B cell (primary cell): ENCODE measurements at regions of chr1 and their contacts with region 1.

Region 1: GRCh38 chr1:26431979-26432695 is at the start of gene DHDDS:
- DNase-seq: peak; percentile 99
- ATAC-seq: peak; percentile 97
- H3K4me3 ChIP-seq: peak within 1 kb of the TSS; percentile 62 to 97 (median 77)
- H3K4me3 Mint-ChIP-seq: peak within 1 kb of the TSS; percentile 95
- H3K27ac ChIP-seq: peak within 1 kb of the TSS; percentile 61 to 86
- H3K27ac Mint-ChIP-seq: peak within 1 kb of the TSS; percentile 93
- H3K4me1 ChIP-seq: peaks cover 15 to 21% of the 10 kb centered on the region in 2 donors
- H3K4me1 Mint-ChIP-seq: peaks cover 20% of the 10 kb centered on the region
- H3K27me3 ChIP-seq: no peaks in the 10 kb centered on the region
- H3K27me3 Mint-ChIP-seq: no peaks in the 10 kb centered on the region
- CTCF ChIP-seq: no peak
- total RNA-seq, gene DHDDS: 54.2 and 61.7 TPM in 2 replicates

Region 2: DNA sequence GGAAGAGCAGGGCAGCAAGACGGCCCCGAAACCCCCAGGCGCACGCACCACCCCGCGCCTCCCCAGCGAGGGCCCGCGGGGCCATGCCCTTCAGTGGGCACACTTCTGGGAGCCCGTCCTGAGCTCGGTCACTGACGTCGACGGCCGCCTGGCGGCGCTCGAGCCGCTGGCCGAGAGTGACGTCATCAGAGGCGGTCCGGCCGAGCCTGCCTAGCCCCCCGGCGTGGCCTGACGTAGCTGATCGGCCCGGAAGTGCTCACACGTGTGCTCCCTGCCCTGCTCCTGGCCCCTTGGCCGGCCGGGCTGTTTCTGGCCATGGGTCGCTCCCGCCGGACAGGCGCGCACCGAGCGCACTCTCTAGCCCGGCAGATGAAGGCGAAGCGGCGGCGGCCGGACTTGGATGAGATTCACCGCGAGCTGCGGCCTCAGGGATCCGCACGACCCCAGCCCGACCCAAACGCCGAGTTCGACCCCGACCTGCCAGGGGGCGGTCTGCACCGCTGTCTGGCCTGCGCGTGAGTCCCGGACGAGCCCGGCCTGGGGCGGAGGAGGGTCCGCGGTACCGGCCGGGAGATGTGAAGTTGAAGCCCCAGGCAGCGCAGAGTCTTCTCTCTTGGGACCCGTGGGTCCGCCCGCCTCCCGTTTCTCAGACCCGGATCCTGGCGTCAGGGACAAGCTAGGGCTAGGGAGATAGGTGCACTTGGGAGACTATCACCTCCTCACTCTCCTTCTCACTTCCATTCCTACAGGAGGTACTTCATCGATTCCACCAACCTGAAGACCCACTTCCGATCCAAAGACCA is 262.3 kb before region 1 on chr1 and contains the start of gene ZNF593:
- CTCF ChIA-PET with region 1: interaction called, 7 read pairs
- POLR2A ChIA-PET with region 1: no interaction called
- intact Hi-C with region 1: loop called (anchors 1 kb)
- DNase-seq: peak; percentile 92
- ATAC-seq: peak; percentile 97
- H3K4me3 ChIP-seq: peak within 1 kb of the TSS; percentile 58 to 94 (median 86)
- H3K4me3 Mint-ChIP-seq: peak within 1 kb of the TSS; percentile 93
- H3K27ac ChIP-seq: peak within 1 kb of the TSS; percentile 38 to 91
- H3K27ac Mint-ChIP-seq: peak within 1 kb of the TSS; percentile 85
- H3K4me1 ChIP-seq: peaks cover 7 to 15% of the 10 kb centered on the region in 2 donors
- H3K4me1 Mint-ChIP-seq: peaks cover 15% of the 10 kb centered on the region
- H3K27me3 ChIP-seq: no peaks in the 10 kb centered on the region
- H3K27me3 Mint-ChIP-seq: no peaks in the 10 kb centered on the region
- CTCF ChIP-seq: peak; percentile 79
- total RNA-seq, gene ZNF593: 10.7 and 13.5 TPM in 2 replicates

Region 3: DNA sequence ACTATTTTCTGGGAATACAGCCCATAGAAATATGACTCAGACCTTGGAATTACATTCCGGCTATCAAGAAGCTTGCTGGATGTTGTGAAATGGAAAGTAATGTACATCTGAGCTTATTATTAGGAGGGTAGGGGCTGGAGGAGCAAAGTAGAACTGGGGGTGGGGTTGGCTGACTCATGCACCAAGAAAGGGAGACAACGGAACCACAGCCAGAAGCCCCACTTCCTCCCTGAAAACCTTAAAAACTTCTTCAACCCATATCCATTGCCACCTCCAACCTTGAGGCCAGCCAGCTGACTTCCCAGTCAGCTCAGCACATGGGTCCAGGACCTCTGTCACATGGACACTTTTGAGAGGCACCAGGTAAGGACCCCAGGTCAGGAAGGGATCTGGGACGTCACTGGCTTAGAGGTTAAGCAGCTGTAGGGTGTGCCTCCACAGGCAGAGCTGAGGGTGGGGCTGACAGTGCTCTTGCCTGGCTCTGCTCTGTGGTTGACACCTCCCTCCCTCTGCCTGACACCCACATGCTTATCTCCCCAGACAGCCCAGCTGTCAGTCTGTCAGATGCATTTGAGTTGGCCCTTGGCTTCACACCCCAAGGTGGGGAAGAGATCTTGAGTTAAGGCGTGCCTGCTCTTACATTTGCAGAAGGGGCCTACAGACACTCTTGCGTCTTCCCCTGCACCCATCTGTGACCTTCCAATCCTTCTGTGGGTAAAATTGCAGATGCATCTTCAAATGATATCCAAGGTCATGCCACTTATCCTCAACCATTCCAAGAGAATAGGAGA is 53.9 kb before region 1 on chr1:
- CTCF ChIA-PET with region 1: no interaction called
- POLR2A ChIA-PET with region 1: no interaction called
- intact Hi-C with region 1: no loop called
- DNase-seq: peak; percentile 62
- ATAC-seq: peak; percentile 93
- H3K4me3 ChIP-seq: peak overlapping the region in 3 of 5 experiments; percentile 17 to 36 (median 17)
- H3K4me3 Mint-ChIP-seq: peak overlapping the region; percentile 77
- H3K27ac ChIP-seq: peak overlapping the region; percentile 52 to 76
- H3K27ac Mint-ChIP-seq: peak overlapping the region; percentile 93
- H3K4me1 ChIP-seq: peaks cover 25 to 40% of the 10 kb centered on the region in 2 donors
- H3K4me1 Mint-ChIP-seq: peaks cover 46% of the 10 kb centered on the region
- H3K27me3 ChIP-seq: no peaks in the 10 kb centered on the region
- H3K27me3 Mint-ChIP-seq: no peaks in the 10 kb centered on the region
- CTCF ChIP-seq: no peak

Region 4: DNA sequence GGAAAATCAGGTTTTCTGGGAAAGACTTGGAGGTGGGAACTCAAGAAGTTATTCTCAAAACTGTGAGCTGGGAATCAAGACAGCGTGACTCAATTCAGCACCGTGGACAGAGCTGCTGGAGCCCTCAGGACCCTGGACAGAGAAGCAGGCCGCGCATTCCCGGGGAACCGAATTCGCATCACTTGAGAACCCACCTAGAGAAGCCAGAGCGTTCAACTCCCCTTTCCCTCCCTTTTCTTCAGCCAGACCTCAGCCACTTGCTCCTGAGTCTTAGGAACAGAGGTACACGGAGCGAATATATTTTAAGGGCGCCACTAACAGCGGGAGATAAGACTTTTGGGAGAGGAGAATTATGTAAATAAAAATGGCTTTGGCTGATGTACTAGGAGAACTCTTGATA is 23.5 kb before region 1 on chr1:
- CTCF ChIA-PET with region 1: interaction called, 3 read pairs
- POLR2A ChIA-PET with region 1: no interaction called
- intact Hi-C with region 1: loop called (anchors 1 kb)
- DNase-seq: peak; percentile 85
- ATAC-seq: peak; percentile 92
- H3K4me3 ChIP-seq: no peak overlapping the region
- H3K4me3 Mint-ChIP-seq: no peak overlapping the region
- H3K27ac ChIP-seq: no peak overlapping the region
- H3K27ac Mint-ChIP-seq: peak overlapping the region; percentile 41
- H3K4me1 ChIP-seq: peaks cover 17 to 18% of the 10 kb centered on the region in 2 donors
- H3K4me1 Mint-ChIP-seq: peaks cover 15% of the 10 kb centered on the region
- H3K27me3 ChIP-seq: peaks cover 0 to 55% (median 36%) of the 10 kb centered on the region in 4 experiments
- H3K27me3 Mint-ChIP-seq: peaks cover 63% of the 10 kb centered on the region
- CTCF ChIP-seq: no peak

Region 5: GRCh38 chr1:26500488-26501175 is 68.5 kb after region 1 on chr1:
- CTCF ChIA-PET with region 1: interaction called, 9 read pairs
- POLR2A ChIA-PET with region 1: interaction called, 11 read pairs
- intact Hi-C with region 1: loop called (anchors 1 kb)
- DNase-seq: peak; percentile 96
- ATAC-seq: peak; percentile 75
- H3K4me3 ChIP-seq: peak overlapping the region in 4 of 5 experiments; percentile 74 to 93 (median 88)
- H3K4me3 Mint-ChIP-seq: peak overlapping the region; percentile 91
- H3K27ac ChIP-seq: peak overlapping the region; percentile 100
- H3K27ac Mint-ChIP-seq: peak overlapping the region; percentile 98
- H3K4me1 ChIP-seq: peaks cover 7 to 19% of the 10 kb centered on the region in 2 donors
- H3K4me1 Mint-ChIP-seq: peaks cover 8% of the 10 kb centered on the region
- H3K27me3 ChIP-seq: no peaks in the 10 kb centered on the region
- H3K27me3 Mint-ChIP-seq: no peaks in the 10 kb centered on the region
- CTCF ChIP-seq: peak; percentile 44